Caco-2 (cell line): ENCODE measurements at regions of chr17 and their contacts with region 1.

Region 1: DNA sequence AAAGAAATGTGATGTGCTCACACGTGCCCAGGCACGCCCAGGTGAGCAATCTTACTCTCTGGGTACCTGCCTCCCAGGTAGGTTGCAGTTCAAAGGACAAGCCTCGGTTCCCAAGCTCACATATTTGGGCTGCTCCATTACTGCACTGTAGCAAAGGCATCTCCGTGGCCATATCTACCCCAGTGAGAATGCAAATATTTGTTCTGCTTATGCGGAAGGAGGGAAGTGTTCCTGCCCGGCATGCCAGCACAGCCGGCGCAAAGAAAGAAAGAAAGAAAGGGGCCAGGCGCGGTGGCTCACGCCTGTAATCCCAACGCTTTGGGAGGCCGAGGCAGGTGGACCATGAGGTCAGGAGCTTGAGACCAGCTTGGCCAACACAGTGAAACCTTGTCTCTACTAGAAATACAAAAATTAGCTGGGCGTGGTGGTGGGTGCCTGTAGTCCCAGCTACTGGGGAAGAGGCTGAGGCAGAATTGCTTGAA is 30.7 kb downstream of the SLC43A2 start:
- DNase-seq: peak; percentile 86 to 91
- H3K4me3 ChIP-seq: no peak overlapping the region
- H3K4me3 Mint-ChIP-seq: peak overlapping the region; percentile 65
- H3K27ac Mint-ChIP-seq: peak overlapping the region; percentile 98
- H3K4me1 ChIP-seq: peaks cover 48% of the 10 kb centered on the region
- H3K4me1 Mint-ChIP-seq: peaks cover 22% of the 10 kb centered on the region
- H3K27me3 ChIP-seq: no peaks in the 10 kb centered on the region
- H3K27me3 Mint-ChIP-seq: no peaks in the 10 kb centered on the region
- CTCF ChIP-seq: no peak

Region 2: DNA sequence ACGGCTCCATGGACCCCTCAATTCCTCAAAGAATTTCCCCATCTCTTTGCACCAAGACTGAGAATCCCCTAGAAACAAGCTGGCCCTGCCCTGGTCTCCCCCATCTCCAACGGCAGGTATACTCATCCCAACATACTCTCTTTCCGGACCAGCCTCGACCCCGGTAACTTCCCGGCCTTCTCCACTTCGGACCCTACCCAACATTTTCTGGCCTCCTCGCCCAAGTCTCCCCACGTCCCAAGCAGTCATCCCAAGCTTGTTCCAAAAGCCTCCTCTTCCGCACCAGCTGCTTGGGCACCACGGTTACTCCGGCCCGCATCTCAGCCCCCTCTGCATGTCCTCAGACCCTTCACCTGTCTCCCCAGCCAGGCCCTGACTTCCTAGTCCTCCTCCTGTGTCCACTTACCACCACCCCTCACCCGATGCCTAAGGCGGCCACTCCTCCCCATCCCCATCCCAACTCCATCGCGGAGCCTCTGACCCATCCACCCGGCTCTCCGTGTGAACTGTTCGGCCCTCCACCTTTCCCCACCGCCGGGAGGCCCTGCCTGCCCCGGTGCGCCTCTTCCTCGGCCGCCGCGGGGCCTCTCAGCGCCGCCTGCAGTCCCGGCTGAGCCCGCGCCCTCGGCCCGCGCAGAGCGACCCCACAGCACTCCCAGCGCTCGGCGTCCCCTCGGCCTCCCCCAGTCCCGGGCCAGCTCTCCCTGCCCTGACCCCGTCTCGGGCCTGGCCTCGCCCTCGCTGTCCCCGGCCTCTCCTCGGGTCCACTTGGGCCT is 36.3 kb before region 1 on chr17:
- CTCF ChIA-PET with region 1: no interaction called
- POLR2A ChIA-PET with region 1: no interaction called
- intact Hi-C with region 1: loop called (anchors 5 kb)
- DNase-seq: peak; percentile 51 to 69
- H3K4me3 ChIP-seq: peak overlapping the region; percentile 96
- H3K4me3 Mint-ChIP-seq: peak overlapping the region; percentile 86
- H3K27ac Mint-ChIP-seq: peak overlapping the region; percentile 82
- H3K4me1 ChIP-seq: peaks cover 8% of the 10 kb centered on the region; the same call in 1 of the 2 replicates
- H3K4me1 Mint-ChIP-seq: peaks cover 29% of the 10 kb centered on the region
- H3K27me3 ChIP-seq: no peaks in the 10 kb centered on the region
- H3K27me3 Mint-ChIP-seq: no peaks in the 10 kb centered on the region
- CTCF ChIP-seq: peak; percentile 13 to 19

Region 3: DNA sequence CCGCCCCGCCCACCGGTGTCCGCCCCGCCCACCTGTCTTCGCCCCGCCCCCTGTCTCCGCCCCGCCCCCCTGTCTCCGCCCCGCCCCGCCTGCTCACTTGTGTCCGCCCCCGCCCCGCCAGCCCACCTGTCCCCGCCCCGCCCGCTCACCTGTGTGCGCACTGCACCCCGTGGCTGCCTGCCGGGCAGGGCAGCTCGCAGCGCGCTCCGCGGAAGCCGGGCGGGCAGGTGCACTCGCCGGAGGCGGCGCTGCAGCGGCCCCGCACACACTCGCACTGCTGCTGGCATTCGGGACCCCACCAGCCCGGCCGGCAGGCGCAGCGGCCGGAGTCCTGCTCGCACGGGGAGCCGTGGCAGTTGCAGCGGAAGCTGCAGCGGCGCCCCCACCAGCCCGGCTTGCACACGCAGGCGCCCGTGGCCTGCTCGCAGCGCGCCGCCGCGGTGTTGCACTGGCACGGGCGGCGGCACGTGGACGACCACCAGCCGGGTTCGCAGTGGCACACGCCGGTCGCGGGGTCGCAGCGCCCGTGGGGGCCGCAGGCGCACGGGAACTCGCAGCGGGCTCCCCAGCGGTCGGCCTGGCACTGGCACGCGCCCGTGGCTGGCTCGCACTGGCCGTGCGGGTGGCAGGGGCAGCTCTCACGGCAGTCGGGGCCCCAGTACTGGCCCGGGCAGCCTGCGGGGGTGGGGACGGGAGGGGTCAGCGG is 45.5 kb after region 1 on chr17:
- CTCF ChIA-PET with region 1: no interaction called
- POLR2A ChIA-PET with region 1: no interaction called
- intact Hi-C with region 1: no loop called
- DNase-seq: peak; percentile 91 to 92
- H3K4me3 ChIP-seq: peak overlapping the region; percentile 60
- H3K4me3 Mint-ChIP-seq: peak overlapping the region; percentile 79
- H3K27ac Mint-ChIP-seq: peak overlapping the region; percentile 10
- H3K4me1 ChIP-seq: peaks cover 13% of the 10 kb centered on the region; the same call in 1 of the 2 replicates
- H3K4me1 Mint-ChIP-seq: no peaks in the 10 kb centered on the region
- H3K27me3 ChIP-seq: no peaks in the 10 kb centered on the region
- H3K27me3 Mint-ChIP-seq: no peaks in the 10 kb centered on the region
- CTCF ChIP-seq: peak; percentile 23 to 49

Region 4: GRCh38 chr17:1746975-1747543 is 149.2 kb after region 1 on chr17:
- CTCF ChIA-PET with region 1: no interaction called
- POLR2A ChIA-PET with region 1: no interaction called
- intact Hi-C with region 1: no loop called
- DNase-seq: no peak
- H3K4me3 ChIP-seq: no peak overlapping the region
- H3K4me3 Mint-ChIP-seq: no peak overlapping the region
- H3K27ac Mint-ChIP-seq: no peak overlapping the region
- H3K4me1 ChIP-seq: peaks cover 21% of the 10 kb centered on the region
- H3K4me1 Mint-ChIP-seq: peaks cover 8% of the 10 kb centered on the region
- H3K27me3 ChIP-seq: no peaks in the 10 kb centered on the region
- H3K27me3 Mint-ChIP-seq: no peaks in the 10 kb centered on the region
- CTCF ChIP-seq: no peak